GM10248 (cell line): ENCODE measurements at regions of chr1 and their contacts with region 1.

Region 1: GRCh38 chr1:180482425-180483275 is 19.7 kb downstream of the ACBD6 start:
- DNase-seq: peak; percentile 38
- CTCF ChIP-seq: peak; percentile 74

Region 2: DNA sequence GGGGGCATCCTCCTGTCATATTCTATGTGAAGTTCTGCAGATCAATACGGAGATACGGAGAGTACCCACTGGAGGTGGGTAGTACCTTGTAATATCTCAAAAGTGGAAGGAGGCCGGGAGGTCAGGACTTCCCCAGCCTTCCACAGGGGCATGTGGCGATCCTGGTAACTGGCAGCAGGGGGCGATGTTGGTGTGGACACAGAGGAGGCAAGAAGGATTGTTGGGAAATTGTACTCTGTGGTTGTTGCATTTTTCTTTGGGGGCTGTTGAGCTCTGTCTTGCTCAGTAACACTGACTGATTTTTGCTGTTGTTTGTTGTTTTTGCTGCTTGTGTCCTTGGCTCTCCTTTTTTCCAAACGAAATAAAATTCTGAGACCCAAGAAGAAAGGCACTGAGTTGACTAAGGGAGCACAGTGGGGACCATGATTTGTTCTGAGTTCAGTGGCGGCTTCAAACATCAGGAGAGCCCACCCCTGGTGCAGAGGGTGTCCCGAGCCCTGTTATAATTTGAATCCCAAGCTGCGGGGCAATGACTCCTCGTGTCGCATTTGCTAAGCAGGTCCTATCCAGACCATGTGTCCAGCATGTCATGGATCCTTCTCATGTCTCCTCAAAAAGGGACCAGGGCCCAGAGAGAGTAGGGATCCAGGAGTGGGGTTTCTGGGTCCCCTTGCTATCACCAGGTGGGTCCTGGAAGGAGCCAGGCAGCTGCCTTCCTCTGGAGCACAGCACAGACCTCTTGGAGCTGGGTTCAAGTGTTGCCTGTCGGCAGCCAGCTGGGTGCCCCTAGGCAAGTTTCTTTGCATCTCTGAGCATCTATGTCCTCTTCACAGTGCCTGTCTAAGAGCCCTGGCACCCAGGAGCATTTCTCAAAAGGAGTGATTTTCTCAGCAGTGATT is 229.8 kb before region 1 on chr1:
- CTCF ChIA-PET with region 1: interaction called, 40 read pairs
- POLR2A ChIA-PET with region 1: no interaction called
- DNase-seq: peak; percentile 84
- CTCF ChIP-seq: peak; percentile 97

Region 3: DNA sequence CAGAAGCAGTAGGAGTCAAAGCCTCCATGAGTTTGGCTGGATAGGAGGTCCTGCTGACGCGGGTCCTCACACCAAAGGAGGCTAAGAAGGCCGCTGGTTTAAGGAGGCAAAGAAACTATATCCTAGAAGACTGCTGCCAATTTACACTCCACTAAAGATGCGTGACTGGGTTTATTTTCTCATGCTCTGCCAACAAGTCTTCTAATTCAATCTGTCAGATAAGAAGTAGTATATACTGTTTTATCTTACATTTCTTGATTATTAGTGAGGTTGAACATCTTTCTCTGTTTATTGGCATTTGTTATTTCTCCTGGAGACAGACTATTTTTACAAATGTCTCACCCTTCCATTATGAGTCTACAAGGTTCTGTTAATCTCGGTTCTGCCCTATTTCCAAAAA is 14.3 kb before region 1 on chr1:
- CTCF ChIA-PET with region 1: interaction called, 34 read pairs
- POLR2A ChIA-PET with region 1: no interaction called
- DNase-seq: no peak
- CTCF ChIP-seq: no peak

Region 4: GRCh38 chr1:180494370-180494769 is 11.7 kb after region 1 on chr1:
- CTCF ChIA-PET with region 1: interaction called, 31 read pairs
- POLR2A ChIA-PET with region 1: interaction called, 4 read pairs
- DNase-seq: no peak
- CTCF ChIP-seq: no peak

Region 5: DNA sequence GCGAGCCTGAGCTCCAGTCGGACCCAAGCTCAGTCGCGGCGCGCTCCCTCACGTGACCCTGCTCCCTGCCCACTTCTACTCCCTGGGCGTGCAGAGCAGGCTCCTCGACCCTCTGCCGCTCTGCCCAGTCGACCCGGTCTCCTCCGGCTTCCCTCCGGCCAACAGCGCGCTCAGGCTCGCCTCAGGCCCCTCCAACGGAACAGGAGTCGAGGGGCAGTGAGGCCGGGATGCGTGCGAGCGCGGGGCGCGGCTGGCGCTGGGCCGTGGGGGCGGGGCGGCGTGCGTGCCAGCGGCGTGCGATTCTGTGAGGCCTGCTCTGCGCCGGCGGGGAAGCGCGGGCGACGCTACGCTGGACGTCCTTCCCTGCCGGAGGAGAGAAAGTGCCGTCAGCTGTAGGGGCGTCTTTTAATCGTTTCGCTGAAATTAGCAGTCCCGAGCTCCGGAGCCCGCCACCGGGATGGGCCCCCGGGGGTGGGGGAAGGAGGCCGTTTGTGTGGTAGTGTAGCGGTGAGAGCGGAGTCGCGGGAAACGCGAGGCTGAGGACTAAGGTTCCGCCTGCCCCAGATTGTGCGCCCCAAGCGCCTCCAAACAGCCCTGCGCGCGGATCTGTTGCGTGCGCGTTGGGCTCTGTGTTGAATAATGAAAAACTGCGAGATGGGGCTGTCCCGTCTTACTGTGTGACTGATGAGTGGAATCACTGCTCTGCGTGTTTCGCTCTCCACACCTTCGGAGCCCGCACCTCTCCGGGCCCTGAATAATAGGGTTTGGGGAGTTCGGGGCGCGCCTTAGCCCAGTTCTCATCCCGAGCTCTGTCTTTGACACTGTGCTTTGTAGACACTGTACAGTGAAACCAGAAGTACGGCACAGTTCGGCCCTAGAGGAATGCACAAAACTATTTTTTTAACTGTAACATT is 20.0 kb after region 1 on chr1 and contains the start of gene ACBD6:
- CTCF ChIA-PET with region 1: interaction called, 31 read pairs
- POLR2A ChIA-PET with region 1: no interaction called
- DNase-seq: peak; percentile 89
- CTCF ChIP-seq: no peak

Region 6: GRCh38 chr1:180533266-180533987 is 50.8 kb after region 1 on chr1:
- CTCF ChIA-PET with region 1: no interaction called
- POLR2A ChIA-PET with region 1: no interaction called
- DNase-seq: peak; percentile 72
- CTCF ChIP-seq: peak; percentile 88